Cardiac septum (tissue), 1 donor: ENCODE measurements at regions of chr11 and their contacts with region 1.

Region 1: GRCh38 chr11:5808500-5809121 is at the start of gene OR52N2:
- DNase-seq: peak; percentile 84
- total RNA-seq, gene OR52N2: not detected

Region 2: GRCh38 chr11:5476184-5476819 is 332.3 kb before region 1 on chr11:
- intact Hi-C with region 1: loop called (anchors 5 kb)
- DNase-seq: no peak

Region 3: GRCh38 chr11:5600374-5600851 is 208.2 kb before region 1 on chr11:
- intact Hi-C with region 1: loop called (anchors 5 kb)
- DNase-seq: no peak